Natural killer cell (primary cell): ENCODE measurements at regions of chr5 and their contacts with region 1.

Region 1: DNA sequence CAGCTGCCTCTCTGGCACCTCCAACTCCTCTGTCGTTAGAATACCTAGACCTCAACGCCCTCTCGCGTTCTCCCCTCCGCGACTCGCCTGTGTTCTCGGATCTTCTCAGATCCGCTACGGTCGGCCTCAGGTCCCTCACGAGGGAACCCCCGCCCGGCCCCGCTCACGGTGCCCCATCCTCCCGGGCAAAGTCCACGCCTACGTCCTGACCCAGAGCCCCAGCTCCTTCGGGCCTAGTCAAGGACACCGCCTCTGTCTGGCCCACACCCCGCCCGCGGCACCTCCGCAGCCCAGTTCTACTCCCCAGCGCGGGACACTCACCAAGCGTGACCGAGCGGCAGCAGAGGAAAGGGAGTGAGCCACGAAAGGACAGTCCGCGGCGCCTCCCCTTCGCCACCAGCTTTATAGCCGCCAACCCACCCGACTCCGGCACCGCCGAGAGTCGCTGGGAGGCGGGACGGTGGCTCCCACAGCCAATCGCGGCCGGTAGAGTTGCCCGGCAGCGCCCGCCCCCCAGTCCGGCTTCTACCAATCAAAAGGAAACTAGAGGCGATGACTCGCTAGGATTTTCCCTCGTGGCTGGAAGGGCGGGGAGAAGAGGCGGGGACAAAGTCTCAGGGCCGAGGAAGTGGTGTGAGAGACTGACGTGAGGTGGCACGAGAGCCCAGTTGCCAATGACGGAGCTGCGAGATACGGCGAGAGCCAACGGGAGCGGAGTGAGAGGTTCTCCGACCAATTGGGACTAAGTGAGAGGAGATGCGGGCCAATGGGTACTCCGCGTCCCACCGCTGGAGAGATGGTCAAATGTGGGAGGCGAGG is at the start of gene HMGCS1:
- DNase-seq: peak; percentile 99
- ATAC-seq: peak; percentile 86 to 95 (median 86)
- H3K4me3 ChIP-seq: peak within 1 kb of the TSS; percentile 82
- H3K4me3 Mint-ChIP-seq: peak within 1 kb of the TSS; percentile 94
- H3K27ac ChIP-seq: peak within 1 kb of the TSS; percentile 98
- H3K27ac Mint-ChIP-seq: peak within 1 kb of the TSS; percentile 98 to 99
- H3K4me1 ChIP-seq: peaks cover 17% of the 10 kb centered on the region
- H3K4me1 Mint-ChIP-seq: peaks cover 32 to 37% of the 10 kb centered on the region in 2 donors
- H3K27me3 ChIP-seq: no peaks in the 10 kb centered on the region
- H3K27me3 Mint-ChIP-seq: peaks cover 0 to 3% of the 10 kb centered on the region in 2 donors
- CTCF ChIP-seq: no peak
- total RNA-seq, gene HMGCS1: 53.0 to 105 (median 85.8) TPM

Region 2: GRCh38 chr5:43066799-43067741 is 246.2 kb before region 1 on chr5:
- intact Hi-C with region 1: loop called (anchors 2 kb)
- DNase-seq: peak; percentile 87 to 95
- ATAC-seq: peak; percentile 51 to 74 (median 57)
- H3K4me3 ChIP-seq: peak overlapping the region; percentile 72
- H3K4me3 Mint-ChIP-seq: peak overlapping the region; percentile 100
- H3K27ac ChIP-seq: peak overlapping the region; percentile 96
- H3K27ac Mint-ChIP-seq: peak overlapping the region; percentile 97 to 100
- H3K4me1 ChIP-seq: peaks cover 46% of the 10 kb centered on the region
- H3K4me1 Mint-ChIP-seq: peaks cover 41 to 51% of the 10 kb centered on the region in 2 donors
- H3K27me3 ChIP-seq: no peaks in the 10 kb centered on the region
- H3K27me3 Mint-ChIP-seq: no peaks in the 10 kb centered on the region
- CTCF ChIP-seq: no peak

Region 3: GRCh38 chr5:43096916-43097315 is 216.3 kb before region 1 on chr5:
- intact Hi-C with region 1: no loop called
- DNase-seq: no peak
- ATAC-seq: no peak
- H3K4me3 ChIP-seq: no peak overlapping the region
- H3K4me3 Mint-ChIP-seq: no peak overlapping the region
- H3K27ac ChIP-seq: no peak overlapping the region
- H3K27ac Mint-ChIP-seq: peak overlapping the region in 1 of 2 donors; percentile 27
- H3K4me1 ChIP-seq: no peaks in the 10 kb centered on the region
- H3K4me1 Mint-ChIP-seq: peaks cover 0 to 5% of the 10 kb centered on the region in 2 donors
- H3K27me3 ChIP-seq: no peaks in the 10 kb centered on the region
- H3K27me3 Mint-ChIP-seq: no peaks in the 10 kb centered on the region
- CTCF ChIP-seq: no peak

Region 4: GRCh38 chr5:43120720-43121564 is 192.3 kb before region 1 on chr5 and contains the start of gene ZNF131:
- intact Hi-C with region 1: loop called (anchors 1 kb)
- DNase-seq: peak; percentile 99
- ATAC-seq: peak; percentile 87 to 96 (median 89)
- H3K4me3 ChIP-seq: peak within 1 kb of the TSS; percentile 59
- H3K4me3 Mint-ChIP-seq: peak within 1 kb of the TSS; percentile 87
- H3K27ac ChIP-seq: peak within 1 kb of the TSS; percentile 88
- H3K27ac Mint-ChIP-seq: peak within 1 kb of the TSS; percentile 88 to 99
- H3K4me1 ChIP-seq: peaks cover 13% of the 10 kb centered on the region
- H3K4me1 Mint-ChIP-seq: peaks cover 26 to 29% of the 10 kb centered on the region in 2 donors
- H3K27me3 ChIP-seq: no peaks in the 10 kb centered on the region
- H3K27me3 Mint-ChIP-seq: no peaks in the 10 kb centered on the region
- CTCF ChIP-seq: no peak
- total RNA-seq, gene ZNF131: 69.0 to 84.0 (median 83.5) TPM

Region 5: GRCh38 chr5:43389679-43390329 is 76.6 kb after region 1 on chr5:
- intact Hi-C with region 1: loop called (anchors 5 kb)
- DNase-seq: peak; percentile 20 to 78
- ATAC-seq: peak; percentile 80 to 88 (median 83)
- H3K4me3 ChIP-seq: no peak overlapping the region
- H3K4me3 Mint-ChIP-seq: no peak overlapping the region
- H3K27ac ChIP-seq: no peak overlapping the region
- H3K27ac Mint-ChIP-seq: peak overlapping the region in 1 of 2 donors; percentile 59
- H3K4me1 ChIP-seq: no peaks in the 10 kb centered on the region
- H3K4me1 Mint-ChIP-seq: peaks cover 9 to 15% of the 10 kb centered on the region in 2 donors
- H3K27me3 ChIP-seq: no peaks in the 10 kb centered on the region
- H3K27me3 Mint-ChIP-seq: no peaks in the 10 kb centered on the region
- CTCF ChIP-seq: peak; percentile 85

Region 6: DNA sequence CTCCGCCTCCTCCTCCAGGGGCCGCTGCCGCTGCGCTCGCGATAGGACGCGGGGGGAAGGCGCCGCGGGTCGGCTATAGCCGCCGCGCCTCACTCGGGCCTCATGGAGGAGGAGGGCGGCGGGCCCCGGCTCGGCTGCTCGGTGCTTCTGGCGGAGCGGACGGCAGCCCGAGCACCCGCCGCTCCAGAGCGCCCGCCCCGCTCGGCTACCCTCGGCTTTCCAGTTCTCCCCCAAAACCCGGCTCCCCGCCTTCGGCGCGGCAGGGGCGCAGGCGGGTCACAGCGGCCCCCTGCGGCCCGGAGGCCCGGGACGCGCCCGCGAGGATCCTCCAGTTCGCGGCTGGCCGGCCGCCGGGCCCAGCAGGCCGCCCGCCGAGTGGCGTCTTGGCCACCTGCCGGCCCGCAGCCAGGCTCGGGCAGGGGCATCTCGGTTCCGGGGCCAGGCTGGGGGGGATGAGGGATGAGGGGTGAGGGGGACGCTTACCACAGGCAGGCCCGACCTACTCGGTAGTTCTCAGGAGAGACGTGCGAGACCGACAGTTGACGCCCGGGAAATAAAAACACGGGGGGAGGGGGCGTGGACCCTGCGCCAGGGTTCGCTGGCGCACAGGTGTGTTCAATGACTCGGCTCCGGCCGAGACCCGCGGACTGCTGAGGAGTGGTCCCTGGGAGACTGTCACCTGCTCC is 243.8 kb after region 1 on chr5 and contains the start of gene PAIP1:
- intact Hi-C with region 1: loop called (anchors 2 kb)
- DNase-seq: peak; percentile 82 to 91
- ATAC-seq: peak; percentile 86 to 92 (median 87)
- H3K4me3 ChIP-seq: peak within 1 kb of the TSS; percentile 86
- H3K4me3 Mint-ChIP-seq: peak within 1 kb of the TSS; percentile 92
- H3K27ac ChIP-seq: peak within 1 kb of the TSS; percentile 87
- H3K27ac Mint-ChIP-seq: peak within 1 kb of the TSS; percentile 92 to 93
- H3K4me1 ChIP-seq: peaks cover 13% of the 10 kb centered on the region
- H3K4me1 Mint-ChIP-seq: peaks cover 6 to 13% of the 10 kb centered on the region in 2 donors
- H3K27me3 ChIP-seq: no peaks in the 10 kb centered on the region
- H3K27me3 Mint-ChIP-seq: no peaks in the 10 kb centered on the region
- CTCF ChIP-seq: peak; percentile 77
- total RNA-seq, gene PAIP1: 22.4 to 35.1 (median 29.2) TPM